H1 (cell line): ENCODE measurements at regions of chr3 and their contacts with region 1.

Region 1: DNA sequence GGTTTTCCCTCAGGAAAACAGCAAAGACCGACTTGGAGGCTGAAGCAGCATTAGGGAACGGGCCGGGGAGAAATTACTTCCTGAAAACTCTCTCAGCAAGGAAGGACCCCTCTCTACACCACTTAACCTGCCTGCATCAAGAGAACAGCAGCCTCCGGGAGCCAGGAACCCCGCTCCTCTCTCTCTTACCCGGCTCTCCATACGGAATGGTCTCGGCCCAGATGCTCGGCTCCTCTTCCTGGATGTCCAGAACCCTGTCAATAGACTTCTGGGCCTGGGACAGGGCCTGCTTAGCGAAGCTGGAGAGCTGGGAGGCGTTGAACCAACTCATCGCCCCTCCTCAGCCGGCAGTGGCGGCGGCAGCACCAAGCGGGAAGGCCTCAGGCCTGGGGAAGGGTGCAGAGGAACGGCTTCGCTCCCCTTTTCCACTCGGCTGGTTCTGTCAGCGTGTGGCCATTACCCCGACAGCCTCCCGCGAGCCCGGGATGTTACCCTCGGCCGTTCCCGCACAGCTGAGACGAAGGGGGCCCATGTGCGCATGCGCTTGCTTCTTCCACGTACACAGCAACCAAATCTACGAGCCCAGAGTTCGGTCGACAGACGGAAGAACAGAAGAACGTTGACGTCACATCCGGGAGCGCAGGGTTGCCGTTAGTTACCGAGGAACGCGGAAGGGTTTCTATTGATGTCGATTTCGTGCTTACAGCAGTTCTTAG is at the start of gene TMF1:
- DNase-seq: peak; percentile 97
- H3K4me3 ChIP-seq: peak within 1 kb of the TSS; percentile 77 to 91 (median 84)
- H3K27ac ChIP-seq: peak within 1 kb of the TSS; percentile 85
- H3K4me1 ChIP-seq: peaks cover 0 to 4% (median 1%) of the 10 kb centered on the region in 4 experiments; a peak in 2 of 7 replicates
- H3K27me3 ChIP-seq: no peaks in the 10 kb centered on the region
- CTCF ChIP-seq: no peak
- EP300 ChIP-seq: no peak; a peak in 1 of 3 replicates
- POLR2A ChIP-seq: peak in 1 of 2 experiments; percentile 68; a peak in 2 of 3 replicates
- RAD21 ChIP-seq: 0 out of 4 replicates have a peak, but pooled peaks of 1 of the 2 experiments have one; percentile 3
- total RNA-seq, gene TMF1: 17.8 and 18.3 TPM in 2 replicates

Region 2: DNA sequence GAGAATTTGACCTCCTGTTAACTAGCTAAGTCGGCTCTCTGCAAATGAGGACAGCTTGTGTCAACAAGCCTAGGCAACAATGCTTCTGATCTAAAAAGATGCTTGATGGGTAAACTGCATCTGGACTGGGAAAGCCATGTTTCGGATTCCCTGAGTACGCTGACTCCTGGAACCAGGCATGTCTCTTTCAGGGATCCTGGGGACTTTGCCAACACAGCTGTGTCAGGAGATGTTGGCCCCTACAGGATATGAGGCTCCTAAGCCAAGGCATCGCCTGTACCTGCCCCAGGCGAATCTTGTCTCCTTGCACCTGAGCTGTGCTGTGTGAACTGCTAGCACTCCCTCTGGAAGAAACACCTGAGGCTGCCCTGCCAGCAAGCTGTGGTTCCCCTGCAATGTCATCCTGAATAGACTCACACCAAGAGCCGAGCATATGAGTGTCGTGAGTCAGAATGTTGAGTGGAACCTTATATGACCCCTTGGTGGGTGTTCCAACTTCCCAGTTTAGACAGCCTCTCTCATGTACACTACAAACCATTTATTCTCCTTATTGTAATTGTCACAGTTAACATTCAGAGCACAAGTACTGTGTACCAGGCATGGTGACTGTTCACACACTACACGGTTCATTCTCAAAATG is 55.4 kb before region 1 on chr3:
- CTCF ChIA-PET with region 1: no interaction called
- POLR2A ChIA-PET with region 1: no interaction called
- DNase-seq: no peak
- H3K4me3 ChIP-seq: no peak overlapping the region
- H3K27ac ChIP-seq: no peak overlapping the region
- H3K4me1 ChIP-seq: no peaks in the 10 kb centered on the region
- H3K27me3 ChIP-seq: no peaks in the 10 kb centered on the region
- CTCF ChIP-seq: no peak
- EP300 ChIP-seq: no peak
- POLR2A ChIP-seq: no peak
- RAD21 ChIP-seq: no peak

Region 3: GRCh38 chr3:69013253-69014021 is 38.5 kb before region 1 on chr3 and contains the start of gene EOGT:
- CTCF ChIA-PET with region 1: interaction called, 4 read pairs
- POLR2A ChIA-PET with region 1: interaction called, 19 read pairs
- DNase-seq: peak; percentile 49 to 91
- H3K4me3 ChIP-seq: peak within 1 kb of the TSS; percentile 38 to 82 (median 56)
- H3K27ac ChIP-seq: peak within 1 kb of the TSS; percentile 56
- H3K4me1 ChIP-seq: peaks cover 6 to 19% (median 9%) of the 10 kb centered on the region in 4 experiments
- H3K27me3 ChIP-seq: peaks cover 0 to 4% (median 0%) of the 10 kb centered on the region in 4 experiments; a peak in 2 of 7 replicates
- CTCF ChIP-seq: peak; percentile 58 to 62 (median 60)
- EP300 ChIP-seq: peak in 1 of 2 experiments; percentile 67; a peak in 1 of 3 replicates
- POLR2A ChIP-seq: peak; percentile 49 to 82
- RAD21 ChIP-seq: peak in 1 of 2 experiments; percentile 20; a peak in 2 of 4 replicates
- total RNA-seq, gene EOGT: 20.7 and 20.8 TPM in 2 replicates

Region 4: GRCh38 chr3:69065318-69065964 is 13.5 kb after region 1 on chr3:
- CTCF ChIA-PET with region 1: interaction called, 6 read pairs
- POLR2A ChIA-PET with region 1: interaction called, 14 read pairs
- DNase-seq: no peak
- H3K4me3 ChIP-seq: no peak overlapping the region
- H3K27ac ChIP-seq: no peak overlapping the region
- H3K4me1 ChIP-seq: no peaks in the 10 kb centered on the region
- H3K27me3 ChIP-seq: no peaks in the 10 kb centered on the region
- CTCF ChIP-seq: no peak
- EP300 ChIP-seq: no peak
- POLR2A ChIP-seq: no peak
- RAD21 ChIP-seq: no peak